CD8-positive, alpha-beta T cell (primary cell): ENCODE measurements at regions of chr3 and their contacts with region 1.

Region 1: DNA sequence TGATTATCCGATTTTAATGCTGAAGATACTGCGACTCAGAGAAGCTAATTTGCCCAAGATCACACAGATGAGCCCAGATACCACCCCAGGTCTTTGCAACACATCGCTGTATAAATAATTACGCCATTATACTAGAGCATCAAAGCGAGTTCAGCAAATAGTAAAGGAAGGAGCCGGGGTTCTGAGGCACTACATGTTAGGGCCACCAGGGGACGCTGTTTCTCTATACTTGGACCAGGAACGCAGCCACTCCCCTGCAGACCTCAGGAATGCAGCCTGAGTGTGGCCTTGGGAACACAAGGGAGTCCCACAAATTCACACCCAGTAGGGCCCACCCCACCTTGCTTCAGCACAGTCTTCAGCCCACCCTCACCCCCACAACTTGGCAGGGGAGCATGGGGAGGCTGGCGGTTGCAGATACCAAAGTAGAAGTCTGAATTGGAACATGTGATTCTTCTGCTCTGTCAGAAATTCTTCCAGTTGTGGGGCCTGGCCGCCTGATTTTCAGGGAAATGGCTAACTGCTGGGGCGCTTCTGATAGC is 57.8 kb upstream of the RYK start:
- DNase-seq: peak; percentile 48 to 81 (median 72)
- ATAC-seq: peak; percentile 92
- H3K4me3 ChIP-seq: no peak overlapping the region
- H3K4me3 Mint-ChIP-seq: peak overlapping the region; percentile 19
- H3K27ac ChIP-seq: no peak overlapping the region
- H3K27ac Mint-ChIP-seq: no peak overlapping the region
- H3K4me1 ChIP-seq: no peaks in the 10 kb centered on the region
- H3K4me1 Mint-ChIP-seq: peaks cover 3% of the 10 kb centered on the region
- H3K27me3 ChIP-seq: peaks cover 0 to 4% of the 10 kb centered on the region in 2 experiments
- H3K27me3 Mint-ChIP-seq: peaks cover 16% of the 10 kb centered on the region
- CTCF ChIP-seq: peak; percentile 99

Region 2: DNA sequence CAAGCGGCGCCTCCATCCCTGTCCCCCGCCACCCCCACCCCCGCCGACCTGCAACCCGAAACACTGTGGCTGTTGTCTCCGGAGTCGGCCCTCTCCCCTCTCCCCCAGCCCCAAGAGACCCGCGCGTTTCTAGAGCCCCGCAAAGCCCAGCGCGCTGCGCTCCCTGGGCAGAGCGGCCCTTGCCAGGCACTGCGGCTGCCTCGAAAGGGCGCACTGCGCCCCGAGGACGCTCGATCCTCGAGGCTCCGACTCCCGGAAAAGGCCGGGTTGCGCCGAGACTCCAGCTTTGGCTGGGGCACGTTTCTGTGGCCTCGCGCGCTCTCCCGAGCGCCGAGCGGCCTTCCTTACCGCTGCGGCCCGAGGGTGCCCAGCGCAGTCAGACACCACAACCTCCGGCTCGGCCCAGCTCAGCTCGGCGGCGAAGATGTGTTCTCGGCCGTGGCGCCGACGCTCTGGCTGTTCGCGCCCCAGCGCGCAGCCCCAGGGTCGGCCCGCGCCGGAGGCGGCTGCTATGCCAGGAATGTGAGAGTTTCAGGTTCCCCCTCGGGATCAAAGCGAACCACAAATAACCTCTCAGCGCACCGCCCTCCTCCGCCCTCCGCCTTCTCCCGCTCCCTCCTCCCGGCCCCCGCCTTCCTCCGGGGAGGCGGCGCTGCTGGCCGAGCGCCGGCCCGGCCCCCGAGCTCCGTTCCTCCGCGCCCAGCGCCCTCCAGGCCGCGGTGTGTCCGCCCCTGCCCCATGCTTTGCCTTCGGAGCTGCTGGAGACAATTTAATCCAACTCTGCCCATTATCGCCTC is 65.8 kb after region 1 on chr3 and contains the start of gene AMOTL2:
- CTCF ChIA-PET with region 1: interaction called, 8 read pairs
- POLR2A ChIA-PET with region 1: no interaction called
- intact Hi-C with region 1: loop called (anchors 1 to 5 kb)
- DNase-seq: peak in 1 of 9 experiments; percentile 18
- ATAC-seq: no peak
- H3K4me3 ChIP-seq: peak within 1 kb of the TSS; percentile 8 to 30
- H3K4me3 Mint-ChIP-seq: peak within 1 kb of the TSS; percentile 81
- H3K27ac ChIP-seq: no peak within 1 kb of the TSS
- H3K27ac Mint-ChIP-seq: no peak within 1 kb of the TSS
- H3K4me1 ChIP-seq: peaks cover 6% of the 10 kb centered on the region
- H3K4me1 Mint-ChIP-seq: peaks cover 10% of the 10 kb centered on the region
- H3K27me3 ChIP-seq: peaks cover 5 to 7% of the 10 kb centered on the region in 2 experiments
- H3K27me3 Mint-ChIP-seq: peaks cover 36% of the 10 kb centered on the region
- CTCF ChIP-seq: no peak
- total RNA-seq, gene AMOTL2: not detected

Region 3: DNA sequence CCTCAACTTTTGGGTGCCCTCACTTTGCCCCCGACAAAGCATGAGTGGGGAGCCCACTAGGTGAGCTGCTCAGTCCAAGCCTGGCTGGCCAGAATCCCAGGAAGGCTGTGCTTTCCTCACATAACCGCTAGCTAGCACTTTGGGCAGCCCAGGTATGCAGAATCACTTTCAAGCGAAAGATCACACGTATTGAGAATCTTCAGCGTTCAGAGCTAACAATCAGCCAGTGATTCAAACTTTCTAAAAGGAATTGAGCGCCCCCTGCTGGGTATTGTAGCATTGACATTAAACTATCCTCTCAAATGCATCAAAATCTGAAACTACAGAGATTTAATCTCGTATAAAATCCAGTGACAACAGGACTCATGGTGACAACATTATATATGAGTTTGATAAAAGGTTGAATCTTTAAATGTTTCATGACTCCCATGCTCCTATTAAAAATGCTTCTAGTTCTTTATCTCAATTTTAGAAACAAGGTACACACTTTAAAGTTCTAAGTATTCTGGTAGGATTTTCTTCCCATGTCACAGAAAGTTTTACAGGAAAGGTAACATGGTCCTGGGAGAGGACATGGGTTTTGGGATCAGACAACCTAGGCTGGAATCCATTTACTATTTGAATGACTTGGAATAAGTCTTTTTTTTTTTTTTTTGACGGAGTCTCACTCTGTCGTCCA is 165.6 kb after region 1 on chr3:
- CTCF ChIA-PET with region 1: interaction called, 67 read pairs
- POLR2A ChIA-PET with region 1: no interaction called
- intact Hi-C with region 1: loop called (anchors 1 kb)
- DNase-seq: peak; percentile 55 to 85 (median 75)
- ATAC-seq: peak; percentile 85
- H3K4me3 ChIP-seq: no peak overlapping the region
- H3K4me3 Mint-ChIP-seq: no peak overlapping the region
- H3K27ac ChIP-seq: no peak overlapping the region
- H3K27ac Mint-ChIP-seq: no peak overlapping the region
- H3K4me1 ChIP-seq: peaks cover 4% of the 10 kb centered on the region
- H3K4me1 Mint-ChIP-seq: peaks cover 5% of the 10 kb centered on the region
- H3K27me3 ChIP-seq: no peaks in the 10 kb centered on the region
- H3K27me3 Mint-ChIP-seq: no peaks in the 10 kb centered on the region
- CTCF ChIP-seq: peak; percentile 83

Region 4: GRCh38 chr3:136042608-136043221 is 1734.3 kb after region 1 on chr3:
- CTCF ChIA-PET with region 1: no interaction called
- POLR2A ChIA-PET with region 1: no interaction called
- intact Hi-C with region 1: loop called in 1 of 2 experiments (anchors 10 kb)
- DNase-seq: peak in 2 of 9 experiments; percentile 22 to 33
- ATAC-seq: no peak
- H3K4me3 ChIP-seq: no peak overlapping the region
- H3K4me3 Mint-ChIP-seq: no peak overlapping the region
- H3K27ac ChIP-seq: no peak overlapping the region
- H3K27ac Mint-ChIP-seq: no peak overlapping the region
- H3K4me1 ChIP-seq: no peaks in the 10 kb centered on the region
- H3K4me1 Mint-ChIP-seq: no peaks in the 10 kb centered on the region
- H3K27me3 ChIP-seq: peaks cover 0 to 4% of the 10 kb centered on the region in 2 experiments
- H3K27me3 Mint-ChIP-seq: peaks cover 25% of the 10 kb centered on the region
- CTCF ChIP-seq: peak; percentile 13